GM13976 (cell line): ENCODE measurements at regions of chr3 and their contacts with region 1.

Region 1: DNA sequence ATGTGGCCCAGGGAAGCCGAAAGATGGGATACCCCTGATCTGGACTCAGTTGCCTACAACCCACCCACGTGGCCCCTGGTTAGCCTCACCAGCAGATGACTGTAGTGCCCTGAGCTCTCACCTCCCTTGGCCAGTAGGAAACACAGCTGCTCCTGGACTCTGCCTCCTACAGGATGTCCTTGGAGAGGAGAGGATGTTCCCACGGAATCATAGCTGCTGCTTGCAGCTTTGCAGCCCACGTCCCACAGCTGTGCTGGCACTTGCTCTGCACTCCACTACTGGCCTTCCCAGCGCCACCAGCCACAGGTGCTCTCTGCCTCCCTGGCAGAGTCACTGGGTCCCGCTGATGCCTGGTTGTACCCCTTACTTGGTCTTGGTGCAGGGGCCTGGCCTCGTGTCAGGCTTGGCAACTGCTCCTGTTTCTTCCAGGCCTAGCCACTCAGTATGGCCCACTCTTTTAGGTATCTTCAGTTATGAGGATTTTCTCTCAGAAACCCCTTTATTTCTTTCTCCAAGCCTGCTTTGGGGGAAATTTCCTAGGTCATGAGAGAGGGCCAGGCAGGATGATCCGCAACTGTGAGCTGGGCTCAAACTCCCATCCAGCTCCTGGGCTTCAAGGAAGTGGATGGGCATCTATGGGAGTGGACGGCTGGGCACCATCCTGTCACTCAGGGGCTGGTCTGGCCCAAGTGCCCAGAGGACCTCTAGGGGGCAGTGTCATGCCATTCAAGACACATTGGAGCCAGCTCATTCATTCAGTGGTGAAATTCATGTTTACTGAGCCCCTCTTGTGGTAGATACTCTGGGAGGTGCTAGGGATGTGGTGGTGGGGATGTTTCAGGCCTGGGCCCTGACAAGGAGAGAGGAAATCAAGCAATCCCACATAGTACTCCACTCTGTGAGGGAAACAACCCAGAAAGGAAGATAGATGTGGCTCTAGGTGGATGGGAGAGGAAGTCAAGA is 16.2 kb upstream of the VILL start:
- DNase-seq: peak; percentile 82
- CTCF ChIP-seq: peak; percentile 92

Region 2: GRCh38 chr3:37855363-37855970 is 118.9 kb before region 1 on chr3:
- in situ Hi-C with region 1: loop called (anchors 10 kb)
- DNase-seq: peak; percentile 78
- CTCF ChIP-seq: peak; percentile 88

Region 3: DNA sequence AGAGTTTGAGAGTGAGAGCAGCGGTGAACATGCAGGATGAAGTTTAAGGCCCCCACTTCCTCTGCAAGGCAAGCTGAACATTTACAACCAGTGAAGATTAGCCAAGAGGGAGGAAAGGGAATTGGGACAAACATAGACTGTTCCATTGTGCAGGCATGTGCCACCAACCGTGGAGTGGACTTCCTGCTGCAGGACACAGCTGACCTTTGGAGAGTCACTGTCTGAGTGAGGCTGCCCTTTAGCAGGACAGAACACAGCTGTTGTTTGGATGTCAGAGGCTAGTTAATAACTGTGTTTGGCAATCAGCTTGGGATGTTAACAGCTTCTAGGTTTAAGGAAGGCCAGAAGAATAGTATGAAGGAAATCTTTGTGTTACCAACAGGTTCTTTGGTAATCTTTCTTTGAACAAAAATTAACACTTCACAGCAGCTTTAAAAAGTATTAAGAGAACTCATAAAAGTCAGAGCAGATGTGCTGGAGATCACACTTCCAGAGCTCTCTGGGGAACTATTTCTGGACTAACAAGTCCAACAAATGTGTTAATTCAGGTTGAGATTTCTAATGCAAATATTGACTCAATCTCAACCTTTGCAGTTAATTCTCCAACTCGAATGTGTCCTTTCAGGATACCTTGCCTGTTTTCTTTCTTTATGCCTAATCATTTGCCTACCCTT is 81.3 kb before region 1 on chr3:
- in situ Hi-C with region 1: no loop called
- DNase-seq: no peak
- CTCF ChIP-seq: no peak